ENCODE measurements at regions of chr22 and their contacts with region 1.

Region 1: GRCh38 chr22:21807544-21808529 is 59.6 kb downstream of the MAPK1 start:
- DNase-seq: no peak
- ATAC-seq: peak in 1 of 2 donors; percentile 28
- H3K4me3 ChIP-seq: no peak overlapping the region
- H3K27ac ChIP-seq: peak overlapping the region; percentile 12
- H3K4me1 ChIP-seq: peaks cover 26% of the 10 kb centered on the region
- H3K27me3 ChIP-seq: no peaks in the 10 kb centered on the region
- CTCF ChIP-seq: no peak

Region 2: GRCh38 chr22:21857481-21857914 is 49.7 kb after region 1 on chr22:
- intact Hi-C with region 1: loop called (anchors 10 kb)
- DNase-seq: no peak
- ATAC-seq: peak in 1 of 2 donors; percentile 38
- H3K4me3 ChIP-seq: no peak overlapping the region
- H3K27ac ChIP-seq: no peak overlapping the region
- H3K4me1 ChIP-seq: peaks cover 83% of the 10 kb centered on the region
- H3K27me3 ChIP-seq: no peaks in the 10 kb centered on the region
- CTCF ChIP-seq: no peak